ENCODE measurements at regions of chr3 and their contacts with region 1.

Region 1: GRCh38 chr3:177624514-177625495 is 427.5 kb upstream of the TBL1XR1 start:
- DNase-seq: no peak
- H3K4me3 ChIP-seq: no peak overlapping the region
- H3K27ac ChIP-seq: no peak overlapping the region
- H3K27me3 ChIP-seq: no peaks in the 10 kb centered on the region
- CTCF ChIP-seq: no peak

Region 2: GRCh38 chr3:176953106-176954060 is 671.4 kb before region 1 on chr3:
- intact Hi-C with region 1: no loop called
- DNase-seq: no peak
- H3K4me3 ChIP-seq: no peak overlapping the region
- H3K27ac ChIP-seq: no peak overlapping the region
- H3K27me3 ChIP-seq: no peaks in the 10 kb centered on the region
- CTCF ChIP-seq: no peak

Region 3: DNA sequence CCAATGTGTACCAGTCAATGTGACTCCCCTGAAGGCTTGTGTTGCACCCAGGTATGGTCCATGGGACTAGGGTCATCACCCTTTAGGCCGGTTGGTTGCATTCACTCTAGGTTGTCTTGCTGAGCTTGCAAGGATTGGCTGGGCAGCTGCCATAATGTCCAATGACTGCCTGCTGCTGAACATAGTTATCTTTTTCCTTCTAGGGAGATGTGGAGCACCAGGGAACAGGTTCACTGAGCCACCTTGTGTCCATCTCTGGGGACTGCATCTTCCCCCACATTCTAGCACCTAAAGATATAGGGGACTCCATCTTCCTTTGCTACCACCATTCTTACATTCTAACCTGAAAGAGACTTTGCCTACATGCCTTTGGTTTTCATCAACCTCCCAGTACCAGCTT is 152.9 kb after region 1 on chr3:
- intact Hi-C with region 1: loop called in 1 of 2 experiments (anchors 10 kb)
- DNase-seq: peak in 7 of 10 donors; percentile 16 to 73 (median 44)
- H3K4me3 ChIP-seq: no peak overlapping the region
- H3K27ac ChIP-seq: no peak overlapping the region
- H3K27me3 ChIP-seq: no peaks in the 10 kb centered on the region
- CTCF ChIP-seq: peak; percentile 21 to 79 (median 63)

Measured in dorsolateral prefrontal cortex (tissue), 120 donors.